Activated B cell treated with CpG ODN at 0.5 μM for 24 hours (primary cell): ENCODE measurements at regions of chr6 and their contacts with region 1.

Region 1: GRCh38 chr6:33118525-33119123 is 42.8 kb downstream of the HLA-DPB1 start:
- DNase-seq: no peak
- ATAC-seq: peak; percentile 48
- H3K4me3 Mint-ChIP-seq: no peak overlapping the region
- H3K27ac Mint-ChIP-seq: no peak overlapping the region
- H3K4me1 Mint-ChIP-seq: peaks cover 51% of the 10 kb centered on the region
- H3K27me3 Mint-ChIP-seq: peaks cover 9% of the 10 kb centered on the region
- CTCF ChIP-seq: peak; percentile 14

Region 2: DNA sequence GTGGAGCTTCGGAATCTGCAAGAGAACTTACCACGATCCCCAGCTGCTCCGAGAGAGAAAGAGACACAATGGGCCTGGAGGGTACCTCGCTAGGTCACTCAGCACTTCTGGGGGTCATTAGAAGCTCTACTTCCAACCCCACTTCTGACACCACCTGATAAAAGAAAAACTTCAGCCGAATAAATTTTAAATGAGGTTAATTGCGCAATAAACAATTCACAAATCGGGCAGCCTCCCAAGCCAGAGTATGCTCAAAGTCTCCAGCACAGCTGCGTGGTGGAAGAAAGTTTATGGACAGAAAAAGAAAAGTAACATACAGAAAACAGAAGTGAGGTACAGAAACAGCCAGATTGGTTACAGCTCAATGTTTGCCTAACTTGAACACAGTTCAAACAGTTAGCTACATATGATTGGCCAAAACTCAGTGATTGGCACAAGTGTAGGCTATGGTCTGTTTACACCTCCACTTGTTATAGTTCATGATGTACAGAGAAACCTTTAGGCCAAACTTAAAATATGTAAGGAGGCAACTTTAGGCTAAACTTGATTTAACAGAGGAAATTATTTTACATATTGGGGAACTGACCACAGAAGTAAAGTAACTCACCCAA is 21.1 kb after region 1 on chr6:
- CTCF ChIA-PET with region 1: interaction called, 12 read pairs
- POLR2A ChIA-PET with region 1: interaction called, 4 read pairs
- intact Hi-C with region 1: no loop called
- DNase-seq: no peak
- ATAC-seq: no peak
- H3K4me3 Mint-ChIP-seq: no peak overlapping the region
- H3K27ac Mint-ChIP-seq: no peak overlapping the region
- H3K4me1 Mint-ChIP-seq: peaks cover 22% of the 10 kb centered on the region
- H3K27me3 Mint-ChIP-seq: no peaks in the 10 kb centered on the region
- CTCF ChIP-seq: no peak

Region 3: DNA sequence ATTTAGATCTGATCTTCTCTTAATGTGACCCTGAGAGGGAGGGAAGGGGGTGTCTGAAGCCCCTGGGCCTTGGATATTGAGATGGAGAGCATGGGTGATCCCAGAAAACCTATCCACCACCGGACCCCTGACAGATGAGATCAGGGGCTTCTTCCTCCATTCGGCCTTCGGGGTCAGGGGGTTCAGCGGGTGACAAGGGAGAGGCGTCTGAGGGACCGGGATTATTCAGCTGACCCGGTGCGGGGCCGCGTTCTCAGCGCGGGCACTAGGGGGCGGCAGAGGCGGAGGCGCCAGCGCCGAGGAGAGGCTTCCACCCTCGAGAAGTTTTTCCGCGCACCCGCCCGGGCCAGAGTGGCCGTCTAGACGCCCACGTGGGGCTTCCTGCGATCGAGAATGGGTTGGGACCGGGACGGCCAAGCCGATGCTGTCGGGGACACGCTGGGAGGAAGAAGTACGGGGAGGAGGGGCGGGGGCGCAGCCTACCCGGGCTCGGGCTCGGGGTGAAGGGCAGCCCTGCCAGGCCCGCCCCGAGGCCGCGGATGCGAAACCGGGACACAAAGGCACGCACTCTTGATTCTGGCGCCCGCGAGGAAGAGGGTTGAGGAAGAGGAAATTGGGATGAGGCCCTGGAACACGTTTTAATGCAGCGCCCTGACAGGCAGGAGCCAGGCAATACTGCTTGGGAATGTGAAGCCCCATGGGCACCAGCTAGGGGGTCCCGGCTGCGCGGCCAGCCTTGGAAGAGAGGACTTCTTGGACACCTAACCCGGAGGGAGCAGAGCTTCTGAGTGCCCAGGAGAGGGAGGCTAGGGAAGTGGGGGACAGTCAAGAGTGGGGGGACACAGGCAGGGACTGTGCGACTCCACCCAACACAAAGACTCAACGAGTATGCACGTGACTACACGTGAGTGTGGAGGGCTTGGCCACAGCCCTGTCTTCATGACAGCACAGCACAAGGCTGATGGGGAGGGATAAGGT is 43.0 kb after region 1 on chr6:
- CTCF ChIA-PET with region 1: interaction called, 3 read pairs
- POLR2A ChIA-PET with region 1: no interaction called
- intact Hi-C with region 1: loop called (anchors 5 kb)
- DNase-seq: peak; percentile 84
- ATAC-seq: peak; percentile 98
- H3K4me3 Mint-ChIP-seq: peak overlapping the region; percentile 92
- H3K27ac Mint-ChIP-seq: peak overlapping the region; percentile 65
- H3K4me1 Mint-ChIP-seq: peaks cover 13% of the 10 kb centered on the region
- H3K27me3 Mint-ChIP-seq: peaks cover 1% of the 10 kb centered on the region
- CTCF ChIP-seq: peak; percentile 47